ENCODE measurements at regions of chr10 and their contacts with region 1.

Region 1: GRCh38 chr10:64115913-64116643 is 594.9 kb downstream of the REEP3 start:
- DNase-seq: no peak
- H3K4me3 ChIP-seq: no peak overlapping the region
- H3K27ac ChIP-seq: no peak overlapping the region
- H3K4me1 ChIP-seq: peaks cover 0 to 4% (median 0%) of the 10 kb centered on the region in 4 experiments; a peak in 2 of 7 replicates
- H3K27me3 ChIP-seq: no peaks in the 10 kb centered on the region
- CTCF ChIP-seq: peak; percentile 39 to 66 (median 55)
- EP300 ChIP-seq: no peak
- POLR2A ChIP-seq: no peak
- RAD21 ChIP-seq: peak; percentile 70 to 73

Region 2: DNA sequence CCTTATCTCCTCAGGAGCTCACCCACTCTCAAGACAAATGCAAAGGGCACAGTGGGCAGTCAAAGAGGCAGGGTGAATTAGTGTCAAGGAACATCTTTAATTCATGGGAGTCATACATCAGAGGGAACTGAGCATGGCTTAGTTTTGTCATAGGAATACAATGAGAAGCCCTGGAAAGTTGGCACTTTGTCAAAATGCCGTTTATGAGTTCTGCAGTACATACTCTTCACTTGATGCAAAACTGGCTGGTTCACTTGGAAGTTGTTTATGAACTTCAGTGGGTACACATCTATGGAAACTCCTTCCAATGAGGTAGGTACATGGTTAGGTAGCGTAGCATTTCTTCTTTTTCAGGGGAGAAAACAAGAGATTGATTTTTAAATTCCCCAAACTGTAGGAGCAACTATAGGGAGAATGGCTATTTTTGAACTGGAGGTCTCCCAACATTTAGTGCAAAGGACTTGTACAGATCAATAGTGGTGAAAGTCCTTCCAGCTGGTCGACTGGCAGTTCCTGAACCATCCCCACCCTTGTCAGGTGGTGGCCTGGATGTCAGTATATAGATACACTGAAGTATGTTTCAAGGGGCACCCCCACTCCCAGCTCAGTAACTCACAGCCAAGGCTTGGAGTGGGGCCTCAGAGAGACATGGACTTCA is 14.3 kb before region 1 on chr10:
- CTCF ChIA-PET with region 1: interaction called, 21 read pairs
- POLR2A ChIA-PET with region 1: no interaction called
- DNase-seq: no peak
- H3K4me3 ChIP-seq: no peak overlapping the region
- H3K27ac ChIP-seq: no peak overlapping the region
- H3K4me1 ChIP-seq: no peaks in the 10 kb centered on the region; a peak in 1 of 7 replicates
- H3K27me3 ChIP-seq: no peaks in the 10 kb centered on the region
- CTCF ChIP-seq: no peak
- EP300 ChIP-seq: no peak
- POLR2A ChIP-seq: no peak
- RAD21 ChIP-seq: no peak

Region 3: DNA sequence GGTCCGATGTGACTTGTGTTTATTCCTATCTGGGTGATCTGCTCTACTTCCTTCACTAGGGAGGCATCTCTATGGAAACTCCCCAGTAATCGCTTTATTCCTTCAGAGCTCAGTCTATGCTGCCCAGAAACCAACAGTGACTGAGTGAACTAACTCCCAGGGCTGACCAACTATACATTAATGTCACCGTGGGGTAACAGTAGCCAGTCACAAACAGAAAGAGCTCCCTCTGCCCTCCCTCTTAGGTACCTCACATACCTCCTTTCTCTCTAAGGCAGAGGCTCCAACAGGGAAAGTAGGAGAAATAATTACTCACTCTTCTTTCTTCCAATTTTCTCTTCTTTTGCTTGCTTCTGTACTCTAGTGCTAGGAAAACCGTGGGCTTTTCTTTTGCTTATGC is 260.1 kb after region 1 on chr10:
- CTCF ChIA-PET with region 1: interaction called, 10 read pairs
- POLR2A ChIA-PET with region 1: no interaction called
- DNase-seq: no peak
- H3K4me3 ChIP-seq: no peak overlapping the region
- H3K27ac ChIP-seq: no peak overlapping the region
- H3K4me1 ChIP-seq: peaks cover 0 to 2% (median 0%) of the 10 kb centered on the region in 4 experiments; a peak in 1 of 7 replicates
- H3K27me3 ChIP-seq: no peaks in the 10 kb centered on the region
- CTCF ChIP-seq: peak in 2 of 3 experiments; percentile 46 to 63; a peak in 3 of 4 replicates
- EP300 ChIP-seq: no peak
- POLR2A ChIP-seq: no peak
- RAD21 ChIP-seq: peak; percentile 54 to 64